Right lobe of liver (tissue), 6 donors: ENCODE measurements at regions of chr5 and their contacts with region 1.

Region 1: GRCh38 chr5:77645158-77645994 is 6.9 kb upstream of the OTP start:
- DNase-seq: peak in 2 of 3 donors; percentile 55 to 57
- ATAC-seq: peak; percentile 93 to 96 (median 94)
- H3K4me3 ChIP-seq: peak overlapping the region in 2 of 3 donors; percentile 14 to 33
- H3K27ac ChIP-seq: no peak overlapping the region
- H3K4me1 ChIP-seq: peaks cover 0 to 8% (median 3%) of the 10 kb centered on the region in 4 donors
- H3K27me3 ChIP-seq: peaks cover 30 to 44% of the 10 kb centered on the region in 2 donors
- CTCF ChIP-seq: peak; percentile 36 to 77 (median 64)
- POLR2A ChIP-seq: no peak

Region 2: DNA sequence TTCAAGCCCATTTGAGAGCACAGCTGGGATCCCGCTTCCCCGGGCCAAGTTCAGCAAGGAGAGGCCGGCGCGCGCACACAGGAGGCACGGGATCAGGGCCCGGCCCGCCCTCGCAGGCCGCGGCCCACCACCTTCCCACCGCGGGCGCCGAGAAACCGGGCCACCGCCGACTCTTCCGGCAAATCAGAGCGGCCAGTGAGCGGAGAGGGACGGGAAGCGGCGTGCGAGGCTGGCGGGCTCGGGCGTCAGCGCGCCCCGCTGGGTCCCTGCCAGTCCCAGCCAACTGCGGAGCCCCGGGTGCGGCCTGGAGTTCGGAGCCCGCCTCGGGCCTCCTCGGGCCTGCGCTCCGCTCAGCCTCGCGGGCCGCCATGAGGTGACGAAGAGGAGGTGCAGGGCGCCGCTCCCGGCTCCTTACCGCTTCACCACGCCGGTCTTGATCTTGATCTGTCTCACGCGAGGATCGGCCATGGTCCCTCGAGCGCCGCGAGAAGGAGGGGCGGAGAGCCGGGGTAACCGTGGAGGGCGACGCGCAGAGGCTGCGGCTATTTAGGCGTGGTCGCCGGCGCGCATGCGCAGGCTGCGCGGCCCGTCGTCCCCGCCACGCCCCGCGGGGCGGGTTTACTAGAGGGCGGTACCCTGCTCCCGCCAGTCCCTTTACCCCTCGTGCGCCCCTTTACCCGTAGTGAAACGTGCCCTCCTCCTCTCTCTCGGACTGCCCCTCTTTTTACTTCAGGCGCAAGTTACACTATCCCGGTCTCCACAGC is 130.6 kb after region 1 on chr5 and contains the start of gene TBCA:
- intact Hi-C with region 1: no loop called
- DNase-seq: peak; percentile 92 to 93 (median 93)
- ATAC-seq: peak; percentile 93 to 97 (median 94)
- H3K4me3 ChIP-seq: peak within 1 kb of the TSS; percentile 56 to 91 (median 88)
- H3K27ac ChIP-seq: peak within 1 kb of the TSS; percentile 89 to 98 (median 93)
- H3K4me1 ChIP-seq: peaks cover 0 to 29% (median 5%) of the 10 kb centered on the region in 4 donors
- H3K27me3 ChIP-seq: no peaks in the 10 kb centered on the region
- CTCF ChIP-seq: peak in 1 of 4 donors; percentile 22
- POLR2A ChIP-seq: peak; percentile 92
- total RNA-seq, gene TBCA: 92.1 to 165 (median 127) TPM

Region 3: GRCh38 chr5:78008356-78008967 is 363.1 kb after region 1 on chr5:
- intact Hi-C with region 1: loop called in 1 of 2 experiments (anchors 10 kb)
- DNase-seq: no peak
- ATAC-seq: peak; percentile 78 to 88 (median 84)
- H3K4me3 ChIP-seq: no peak overlapping the region
- H3K27ac ChIP-seq: no peak overlapping the region
- H3K4me1 ChIP-seq: peaks cover 0 to 14% (median 0%) of the 10 kb centered on the region in 4 donors
- H3K27me3 ChIP-seq: no peaks in the 10 kb centered on the region
- CTCF ChIP-seq: peak; percentile 84 to 91 (median 89)
- POLR2A ChIP-seq: no peak